CD4-positive, alpha-beta memory T cell (primary cell): ENCODE measurements at regions of chr11 and their contacts with region 1.

Region 1: DNA sequence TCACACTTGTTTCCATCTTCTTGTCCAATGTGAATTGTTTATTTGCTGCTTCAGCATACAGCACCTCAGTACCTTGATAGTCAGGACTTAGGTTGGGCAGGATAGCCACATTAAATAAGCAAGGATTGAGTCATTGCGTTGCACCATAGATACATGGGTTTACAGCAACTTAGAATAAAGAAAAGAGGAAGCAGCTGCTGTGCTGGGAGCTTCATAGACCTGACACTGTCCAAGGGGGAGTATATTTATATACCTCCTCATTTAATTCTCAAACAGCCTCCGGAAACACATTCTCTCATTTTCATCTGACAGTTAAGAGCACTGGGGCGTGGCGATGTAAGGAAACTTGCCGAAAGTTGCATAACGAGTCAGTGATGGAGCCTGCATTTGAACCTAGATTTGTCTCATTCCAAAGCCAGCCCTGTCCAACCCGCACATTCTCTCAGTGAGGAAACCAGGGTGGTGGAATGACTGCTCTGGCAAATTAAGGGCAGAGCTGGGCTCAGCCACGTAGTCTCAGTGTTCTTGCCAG is 42.2 kb downstream of the UBASH3B start:
- DNase-seq: peak; percentile 36 to 72 (median 53)
- H3K4me3 ChIP-seq: peak overlapping the region in 1 of 2 donors; percentile 39
- H3K4me3 Mint-ChIP-seq: peak overlapping the region; percentile 42 to 87 (median 76)
- H3K27ac ChIP-seq: peak overlapping the region; percentile 64
- H3K27ac Mint-ChIP-seq: peak overlapping the region; percentile 81 to 96 (median 93)
- H3K4me1 ChIP-seq: peaks cover 89% of the 10 kb centered on the region
- H3K4me1 Mint-ChIP-seq: peaks cover 66 to 93% (median 81%) of the 10 kb centered on the region in 4 donors
- H3K27me3 ChIP-seq: no peaks in the 10 kb centered on the region
- H3K27me3 Mint-ChIP-seq: no peaks in the 10 kb centered on the region

Region 2: DNA sequence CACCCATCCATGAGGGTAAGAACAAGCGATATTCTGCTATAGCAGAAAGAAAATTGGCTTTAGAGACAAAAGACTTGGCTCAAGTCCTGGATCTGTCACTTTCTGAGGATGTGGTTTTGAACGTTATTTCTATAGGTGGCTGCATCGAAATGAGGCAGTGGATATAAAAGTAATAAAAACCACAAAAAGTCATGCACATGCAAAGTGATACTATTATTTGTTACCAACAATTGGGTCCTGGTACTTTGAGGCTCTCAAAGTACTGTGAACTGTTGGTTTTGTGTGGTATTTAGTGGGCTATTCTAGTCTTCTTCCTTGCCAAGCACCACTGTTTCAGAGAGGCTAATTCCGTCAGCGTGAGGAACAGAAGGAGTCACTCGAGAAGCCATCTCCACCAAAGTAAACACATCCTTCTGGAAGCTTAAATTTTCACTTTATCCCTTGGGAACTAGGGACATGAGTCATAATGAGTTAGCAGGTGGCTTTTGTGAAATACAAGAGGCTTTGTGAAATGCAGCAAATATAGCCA is 29.1 kb before region 1 on chr11:
- CTCF ChIA-PET with region 1: interaction called, 36 read pairs
- POLR2A ChIA-PET with region 1: interaction called, 58 read pairs
- intact Hi-C with region 1: no loop called
- DNase-seq: peak in 4 of 5 donors; percentile 51 to 62 (median 54)
- H3K4me3 ChIP-seq: peak overlapping the region in 1 of 2 donors; percentile 24
- H3K4me3 Mint-ChIP-seq: peak overlapping the region; percentile 22 to 88 (median 68)
- H3K27ac ChIP-seq: peak overlapping the region; percentile 15
- H3K27ac Mint-ChIP-seq: peak overlapping the region; percentile 73 to 93 (median 88)
- H3K4me1 ChIP-seq: peaks cover 80% of the 10 kb centered on the region
- H3K4me1 Mint-ChIP-seq: peaks cover 49 to 84% (median 69%) of the 10 kb centered on the region in 4 donors
- H3K27me3 ChIP-seq: no peaks in the 10 kb centered on the region
- H3K27me3 Mint-ChIP-seq: no peaks in the 10 kb centered on the region

Region 3: GRCh38 chr11:122681735-122682134 is 16.0 kb before region 1 on chr11:
- CTCF ChIA-PET with region 1: interaction called, 8 read pairs
- POLR2A ChIA-PET with region 1: interaction called, 58 read pairs
- intact Hi-C with region 1: no loop called
- DNase-seq: no peak
- H3K4me3 ChIP-seq: no peak overlapping the region
- H3K4me3 Mint-ChIP-seq: no peak overlapping the region
- H3K27ac ChIP-seq: no peak overlapping the region
- H3K27ac Mint-ChIP-seq: peak overlapping the region in 2 of 7 donors; percentile 4 to 27
- H3K4me1 ChIP-seq: peaks cover 25% of the 10 kb centered on the region
- H3K4me1 Mint-ChIP-seq: peaks cover 29 to 75% (median 45%) of the 10 kb centered on the region in 4 donors
- H3K27me3 ChIP-seq: no peaks in the 10 kb centered on the region
- H3K27me3 Mint-ChIP-seq: no peaks in the 10 kb centered on the region

Region 4: DNA sequence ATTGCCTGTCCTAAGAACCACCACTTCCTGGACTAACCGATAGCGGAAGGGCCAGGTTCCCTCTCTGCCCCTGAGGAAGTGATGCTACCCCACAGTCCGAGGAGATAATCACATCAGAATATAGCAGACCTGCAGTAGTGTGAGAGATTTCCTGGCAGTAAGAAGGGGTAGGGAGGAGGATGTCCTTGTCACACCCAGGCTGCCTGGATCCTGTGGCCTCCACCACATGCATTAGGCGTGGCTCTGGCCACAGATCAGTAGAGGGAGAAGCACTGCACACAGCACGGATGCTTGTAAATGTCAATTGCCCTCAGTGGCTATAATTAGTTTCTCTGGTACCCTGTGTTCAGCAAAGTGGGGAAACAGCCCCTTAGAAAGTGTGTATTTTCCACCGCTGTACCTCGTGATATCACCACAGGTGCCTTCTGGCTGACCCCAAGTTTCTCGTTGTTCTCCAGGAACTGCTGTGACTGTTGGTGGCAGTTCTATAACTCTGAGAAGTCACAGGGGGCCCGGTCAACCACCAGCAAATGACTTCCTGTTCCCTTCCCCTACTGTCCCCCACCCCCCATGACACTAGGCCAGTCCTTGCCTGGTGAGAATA is 19.7 kb after region 1 on chr11:
- CTCF ChIA-PET with region 1: interaction called, 7 read pairs
- POLR2A ChIA-PET with region 1: interaction called, 19 read pairs
- intact Hi-C with region 1: loop called (anchors 2 kb)
- DNase-seq: peak in 2 of 5 donors; percentile 8 to 19
- H3K4me3 ChIP-seq: no peak overlapping the region
- H3K4me3 Mint-ChIP-seq: peak overlapping the region in 5 of 8 donors; percentile 11 to 37 (median 24)
- H3K27ac ChIP-seq: no peak overlapping the region
- H3K27ac Mint-ChIP-seq: peak overlapping the region; percentile 74 to 92 (median 85)
- H3K4me1 ChIP-seq: peaks cover 41% of the 10 kb centered on the region
- H3K4me1 Mint-ChIP-seq: peaks cover 39 to 72% (median 57%) of the 10 kb centered on the region in 4 donors
- H3K27me3 ChIP-seq: no peaks in the 10 kb centered on the region
- H3K27me3 Mint-ChIP-seq: no peaks in the 10 kb centered on the region

Region 5: GRCh38 chr11:122743949-122744348 is 46.2 kb after region 1 on chr11:
- CTCF ChIA-PET with region 1: interaction called, 14 read pairs
- POLR2A ChIA-PET with region 1: interaction called, 131 read pairs
- intact Hi-C with region 1: loop called (anchors 1 kb)
- DNase-seq: peak; percentile 73 to 92 (median 78)
- H3K4me3 ChIP-seq: peak overlapping the region in 1 of 2 donors; percentile 41
- H3K4me3 Mint-ChIP-seq: no peak overlapping the region
- H3K27ac ChIP-seq: peak overlapping the region; percentile 59
- H3K27ac Mint-ChIP-seq: no peak overlapping the region
- H3K4me1 ChIP-seq: peaks cover 74% of the 10 kb centered on the region
- H3K4me1 Mint-ChIP-seq: peaks cover 5 to 59% (median 29%) of the 10 kb centered on the region in 4 donors
- H3K27me3 ChIP-seq: no peaks in the 10 kb centered on the region
- H3K27me3 Mint-ChIP-seq: no peaks in the 10 kb centered on the region